Activated CD4-positive, alpha-beta T cell treated with anti-CD3 and anti-CD28 coated beads, Interleukin-2, amount 10 ng/mL, durations not matched to agents 24 days and 14 days (primary cell): ENCODE measurements at regions of chr17 and their contacts with region 1.

Region 1: DNA sequence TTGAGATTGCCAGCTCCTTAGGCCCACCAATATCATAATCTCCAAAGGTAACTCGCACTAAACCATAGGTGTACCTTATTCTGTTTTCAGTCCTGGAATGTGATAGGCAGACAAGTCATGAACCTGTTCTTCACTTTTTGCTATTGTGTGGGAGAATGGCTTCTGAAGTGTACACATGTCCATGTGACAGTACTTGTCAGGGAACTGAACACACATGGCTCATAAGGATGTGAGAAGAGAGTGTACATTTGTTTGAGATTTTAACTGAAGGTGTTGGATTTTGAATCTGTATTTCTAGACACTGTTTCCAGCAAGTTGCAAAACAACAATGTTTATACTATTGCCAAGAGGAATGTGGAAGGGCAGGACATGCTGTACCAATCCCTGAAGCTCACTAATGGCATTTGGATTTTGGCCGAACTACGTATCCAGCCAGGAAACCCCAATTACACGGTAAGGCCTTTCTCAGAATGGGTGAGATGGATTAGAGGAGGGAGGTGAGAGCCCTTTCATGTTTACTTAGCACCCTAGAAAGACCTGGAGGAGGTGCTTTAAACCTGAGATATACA is 14.5 kb upstream of the RASL10B start:
- DNase-seq: no peak
- H3K4me3 Mint-ChIP-seq: no peak overlapping the region
- H3K27ac Mint-ChIP-seq: no peak overlapping the region
- H3K4me1 Mint-ChIP-seq: no peaks in the 10 kb centered on the region
- H3K27me3 Mint-ChIP-seq: no peaks in the 10 kb centered on the region

Region 2: GRCh38 chr17:35679007-35679682 is 37.8 kb before region 1 on chr17:
- intact Hi-C with region 1: loop called (anchors 1 kb)
- DNase-seq: no peak
- H3K4me3 Mint-ChIP-seq: no peak overlapping the region
- H3K27ac Mint-ChIP-seq: peak overlapping the region; percentile 70
- H3K4me1 Mint-ChIP-seq: peaks cover 16% of the 10 kb centered on the region
- H3K27me3 Mint-ChIP-seq: no peaks in the 10 kb centered on the region